Activated CD4-positive, alpha-beta T cell treated with anti-CD3 and anti-CD28 coated beads for 36 hours (primary cell): ENCODE measurements at regions of chr1 and their contacts with region 1.

Region 1: GRCh38 chr1:175124861-175125260 is 57.2 kb downstream of the TNN start:
- DNase-seq: no peak
- ATAC-seq: no peak
- H3K4me3 Mint-ChIP-seq: no peak overlapping the region
- H3K27ac Mint-ChIP-seq: no peak overlapping the region
- H3K4me1 Mint-ChIP-seq: no peaks in the 10 kb centered on the region
- H3K27me3 Mint-ChIP-seq: no peaks in the 10 kb centered on the region

Region 2: GRCh38 chr1:174769961-174770549 is 354.8 kb before region 1 on chr1:
- CTCF ChIA-PET with region 1: no interaction called
- POLR2A ChIA-PET with region 1: no interaction called
- intact Hi-C with region 1: loop called in 1 of 2 experiments (anchors 1 kb)
- DNase-seq: no peak
- ATAC-seq: no peak
- H3K4me3 Mint-ChIP-seq: no peak overlapping the region
- H3K27ac Mint-ChIP-seq: no peak overlapping the region
- H3K4me1 Mint-ChIP-seq: peaks cover 10% of the 10 kb centered on the region
- H3K27me3 Mint-ChIP-seq: no peaks in the 10 kb centered on the region

Region 3: DNA sequence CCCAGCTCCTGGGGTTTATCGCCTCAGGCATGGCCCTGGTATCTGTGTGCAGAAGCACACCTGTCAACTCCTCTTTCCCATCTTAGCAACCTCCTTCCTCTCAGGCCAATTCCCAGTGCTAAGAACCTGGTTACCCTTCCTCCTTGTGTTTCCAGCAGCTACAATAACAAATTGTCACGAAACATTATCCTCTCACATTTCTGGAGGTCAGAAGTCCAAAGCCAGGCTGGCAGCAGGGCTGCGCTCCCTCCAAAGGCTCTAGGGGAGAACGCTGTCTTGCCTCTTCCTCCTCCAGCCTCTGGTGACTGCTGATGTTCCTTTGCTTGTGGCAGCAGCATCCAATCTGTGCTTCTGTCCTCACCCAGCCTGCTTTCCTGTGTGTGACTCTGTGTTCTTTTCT is 90.9 kb before region 1 on chr1:
- CTCF ChIA-PET with region 1: interaction called, 38 read pairs
- POLR2A ChIA-PET with region 1: interaction called, 7 read pairs
- intact Hi-C with region 1: loop called (anchors 1 kb)
- DNase-seq: no peak
- ATAC-seq: no peak
- H3K4me3 Mint-ChIP-seq: no peak overlapping the region
- H3K27ac Mint-ChIP-seq: no peak overlapping the region
- H3K4me1 Mint-ChIP-seq: peaks cover 9% of the 10 kb centered on the region
- H3K27me3 Mint-ChIP-seq: no peaks in the 10 kb centered on the region